ENCODE measurements at regions of chr6 and their contacts with region 1.

Region 1: GRCh38 chr6:31197559-31198305 is 27.2 kb upstream of the POU5F1 start:
- DNase-seq: peak; percentile 69
- ATAC-seq: peak; percentile 84
- H3K4me3 ChIP-seq: peak overlapping the region; percentile 87
- H3K27ac ChIP-seq: peak overlapping the region; percentile 97
- H3K4me1 ChIP-seq: peaks cover 15% of the 10 kb centered on the region
- H3K27me3 ChIP-seq: no peaks in the 10 kb centered on the region
- CTCF ChIP-seq: no peak
- EP300 ChIP-seq: peak; percentile 31 to 54; a peak in 2 of 4 replicates
- POLR2A ChIP-seq: peak; percentile 87
- RAD21 ChIP-seq: 0 out of 2 replicates have a peak, but pooled peaks have one; percentile 12

Region 2: DNA sequence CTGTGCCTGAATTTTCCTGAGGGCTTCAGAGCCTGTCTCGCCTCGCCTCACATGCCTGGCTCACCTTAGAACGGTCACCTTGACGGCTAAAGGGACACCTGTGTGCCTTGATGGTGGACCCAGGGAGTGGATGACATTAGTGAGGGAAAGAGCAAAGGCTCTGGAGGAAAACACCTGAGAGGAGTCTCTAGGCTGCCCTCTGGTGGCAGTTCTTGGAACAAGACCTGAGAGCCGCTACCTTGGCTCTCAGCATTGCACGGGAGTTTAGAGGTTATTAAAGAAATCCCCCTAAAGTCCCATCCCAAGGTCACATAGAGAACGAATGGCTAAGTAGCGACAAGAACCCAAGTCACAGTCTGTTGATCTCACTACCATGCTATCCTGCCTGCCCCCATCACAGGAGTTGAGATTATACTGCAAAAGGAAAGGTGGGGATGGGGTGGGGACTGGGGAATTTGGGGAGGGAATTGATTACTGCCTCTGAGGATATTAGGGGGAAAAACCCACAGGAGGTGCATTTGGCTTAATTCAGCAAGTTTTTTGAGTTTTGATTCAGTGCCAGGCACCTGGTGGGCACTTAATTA is 69.5 kb before region 1 on chr6:
- CTCF ChIA-PET with region 1: interaction called, 326 read pairs
- POLR2A ChIA-PET with region 1: no interaction called
- RAD21 ChIA-PET with region 1: interaction called, 3 read pairs
- SMC1A ChIA-PET with region 1: interaction called, 16 read pairs
- in situ Hi-C with region 1: no loop called
- intact Hi-C with region 1: no loop called
- DNase-seq: peak; percentile 13
- ATAC-seq: peak; percentile 81
- H3K4me3 ChIP-seq: no peak overlapping the region
- H3K27ac ChIP-seq: no peak overlapping the region
- H3K4me1 ChIP-seq: no peaks in the 10 kb centered on the region; the same call in 1 of the 2 replicates
- H3K27me3 ChIP-seq: no peaks in the 10 kb centered on the region; a peak in 4 of 4 replicates
- CTCF ChIP-seq: peak; percentile 80 to 90 (median 82)
- EP300 ChIP-seq: no peak
- POLR2A ChIP-seq: no peak
- RAD21 ChIP-seq: peak; percentile 30; the same call in 1 of the 2 replicates

Region 3: DNA sequence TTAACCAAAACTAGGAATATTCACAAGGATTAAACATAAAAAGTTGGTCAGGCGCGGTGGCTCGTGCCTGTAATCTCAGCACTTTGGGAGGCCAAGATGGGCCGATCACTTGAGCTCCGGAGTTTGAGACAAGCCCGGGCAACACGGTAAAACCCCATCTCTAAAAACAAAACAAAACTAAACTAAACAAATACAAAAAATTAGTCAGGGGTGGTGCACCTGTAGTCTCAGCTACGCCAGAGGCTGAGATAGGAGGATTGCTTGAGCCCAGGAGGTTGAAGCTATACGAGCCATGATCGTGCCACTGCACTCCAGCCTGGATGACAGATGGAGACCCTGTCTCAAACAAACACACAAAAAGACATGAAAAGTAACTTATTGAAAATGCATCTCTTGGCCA is 62.0 kb before region 1 on chr6:
- CTCF ChIA-PET with region 1: interaction called, 326 read pairs
- POLR2A ChIA-PET with region 1: interaction called, 9 read pairs
- RAD21 ChIA-PET with region 1: interaction called, 24 read pairs
- SMC1A ChIA-PET with region 1: interaction called, 52 read pairs
- in situ Hi-C with region 1: loop called (anchors 5 kb)
- intact Hi-C with region 1: loop called (anchors 1 kb)
- DNase-seq: no peak
- ATAC-seq: peak; percentile 62
- H3K4me3 ChIP-seq: no peak overlapping the region
- H3K27ac ChIP-seq: no peak overlapping the region
- H3K4me1 ChIP-seq: peaks cover 3% of the 10 kb centered on the region
- H3K27me3 ChIP-seq: no peaks in the 10 kb centered on the region
- CTCF ChIP-seq: no peak
- EP300 ChIP-seq: no peak
- POLR2A ChIP-seq: no peak
- RAD21 ChIP-seq: no peak

Region 4: GRCh38 chr6:31143148-31143547 is 54.6 kb before region 1 on chr6:
- CTCF ChIA-PET with region 1: interaction called, 326 read pairs
- POLR2A ChIA-PET with region 1: no interaction called
- RAD21 ChIA-PET with region 1: interaction called, 9 read pairs
- SMC1A ChIA-PET with region 1: interaction called, 52 read pairs
- in situ Hi-C with region 1: loop called (anchors 5 kb)
- intact Hi-C with region 1: no loop called
- DNase-seq: no peak
- ATAC-seq: no peak
- H3K4me3 ChIP-seq: no peak overlapping the region
- H3K27ac ChIP-seq: no peak overlapping the region
- H3K4me1 ChIP-seq: peaks cover under 1% of the 10 kb centered on the region; the same call in 1 of the 2 replicates
- H3K27me3 ChIP-seq: no peaks in the 10 kb centered on the region
- CTCF ChIP-seq: no peak
- EP300 ChIP-seq: no peak
- POLR2A ChIP-seq: no peak
- RAD21 ChIP-seq: no peak

Region 5: GRCh38 chr6:31158140-31158862 is 39.4 kb before region 1 on chr6 and contains the start of gene TCF19:
- CTCF ChIA-PET with region 1: interaction called, 15 read pairs
- POLR2A ChIA-PET with region 1: interaction called, 6 read pairs
- RAD21 ChIA-PET with region 1: interaction called, 12 read pairs
- SMC1A ChIA-PET with region 1: interaction called, 21 read pairs
- in situ Hi-C with region 1: no loop called
- intact Hi-C with region 1: loop called (anchors 2 kb)
- DNase-seq: peak; percentile 98
- ATAC-seq: peak; percentile 93
- H3K4me3 ChIP-seq: peak within 1 kb of the TSS; percentile 90
- H3K27ac ChIP-seq: peak within 1 kb of the TSS; percentile 67
- H3K4me1 ChIP-seq: peaks cover 12% of the 10 kb centered on the region
- H3K27me3 ChIP-seq: no peaks in the 10 kb centered on the region
- CTCF ChIP-seq: no peak
- EP300 ChIP-seq: no peak
- POLR2A ChIP-seq: peak; percentile 66
- RAD21 ChIP-seq: no peak
- polyA plus RNA-seq, gene TCF19: 7.7 to 19.5 TPM

Region 6: GRCh38 chr6:31163922-31164321 is 33.8 kb before region 1 on chr6:
- CTCF ChIA-PET with region 1: interaction called, 15 read pairs
- POLR2A ChIA-PET with region 1: interaction called, 6 read pairs
- RAD21 ChIA-PET with region 1: interaction called, 12 read pairs
- SMC1A ChIA-PET with region 1: interaction called, 21 read pairs
- in situ Hi-C with region 1: no loop called
- intact Hi-C with region 1: loop called (anchors 2 kb)
- DNase-seq: no peak
- ATAC-seq: peak; percentile 8; the same call in 1 of the 3 replicates
- H3K4me3 ChIP-seq: no peak overlapping the region
- H3K27ac ChIP-seq: peak overlapping the region; percentile 52
- H3K4me1 ChIP-seq: peaks cover 32% of the 10 kb centered on the region
- H3K27me3 ChIP-seq: no peaks in the 10 kb centered on the region
- CTCF ChIP-seq: no peak
- EP300 ChIP-seq: no peak
- POLR2A ChIP-seq: no peak
- RAD21 ChIP-seq: no peak

Region 7: DNA sequence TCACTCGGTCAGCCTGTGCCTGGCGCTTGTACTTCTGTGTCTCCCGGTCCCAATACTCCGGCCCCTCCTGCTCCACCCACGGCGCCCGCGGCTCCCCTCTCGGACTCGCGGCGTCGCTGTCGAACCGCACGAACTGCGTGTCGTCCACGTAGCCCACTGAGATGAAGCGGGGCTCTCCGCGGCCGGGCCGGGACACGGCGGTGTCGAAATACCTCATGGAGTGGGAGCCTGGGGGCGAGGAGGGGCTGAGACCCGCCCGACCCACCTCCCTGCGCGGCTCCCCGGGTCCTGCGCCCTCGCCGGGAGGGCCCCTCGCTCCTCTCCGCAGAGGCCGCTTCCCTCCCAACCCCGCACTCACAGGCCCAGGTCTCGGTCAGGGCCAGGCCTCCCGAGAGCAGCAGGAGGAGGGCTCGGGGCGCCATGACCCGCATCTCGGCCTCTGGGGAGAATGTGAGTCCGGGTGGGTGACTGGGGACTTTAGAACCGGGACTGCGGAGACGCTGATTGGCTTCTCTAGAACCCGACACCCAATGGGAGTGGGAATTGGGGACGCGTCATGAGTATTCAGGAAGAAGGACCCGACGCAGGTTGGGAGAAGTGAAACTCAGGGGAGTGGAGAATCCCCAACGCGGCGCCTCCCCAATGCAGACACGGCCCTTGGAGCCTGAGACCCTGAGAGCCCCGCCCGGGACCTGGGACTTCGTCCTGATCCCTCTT is 74.1 kb after region 1 on chr6 and contains the start of gene HLA-C:
- CTCF ChIA-PET with region 1: interaction called, 6 read pairs
- POLR2A ChIA-PET with region 1: interaction called, 9 read pairs
- RAD21 ChIA-PET with region 1: interaction called, 5 read pairs
- SMC1A ChIA-PET with region 1: interaction called, 10 read pairs
- in situ Hi-C with region 1: loop called (anchors 5 kb)
- intact Hi-C with region 1: loop called (anchors 2 kb)
- DNase-seq: peak; percentile 95
- ATAC-seq: peak; percentile 88
- H3K4me3 ChIP-seq: peak within 1 kb of the TSS; percentile 83
- H3K27ac ChIP-seq: peak within 1 kb of the TSS; percentile 95
- H3K4me1 ChIP-seq: peaks cover 21% of the 10 kb centered on the region
- H3K27me3 ChIP-seq: no peaks in the 10 kb centered on the region
- CTCF ChIP-seq: peak in 1 of 3 experiments; percentile 10; a peak in 1 of 6 replicates
- EP300 ChIP-seq: no peak
- POLR2A ChIP-seq: peak; percentile 95
- RAD21 ChIP-seq: peak; percentile 30; the same call in 1 of the 2 replicates
- polyA plus RNA-seq, gene HLA-C: 121 to 379 TPM